ENCODE measurements at regions of chr2 and their contacts with region 1.

Region 1: GRCh38 chr2:107936433-107937359 is 49.6 kb upstream of the SLC5A7 start:
- DNase-seq: peak in 1 of 2 experiments; percentile 26
- H3K4me3 ChIP-seq: no peak overlapping the region
- H3K4me3 Mint-ChIP-seq: no peak overlapping the region
- H3K27ac Mint-ChIP-seq: no peak overlapping the region
- H3K4me1 ChIP-seq: no peaks in the 10 kb centered on the region
- H3K4me1 Mint-ChIP-seq: no peaks in the 10 kb centered on the region
- H3K27me3 ChIP-seq: no peaks in the 10 kb centered on the region
- H3K27me3 Mint-ChIP-seq: peaks cover 6% of the 10 kb centered on the region
- CTCF ChIP-seq: peak; percentile 17 to 61

Region 2: DNA sequence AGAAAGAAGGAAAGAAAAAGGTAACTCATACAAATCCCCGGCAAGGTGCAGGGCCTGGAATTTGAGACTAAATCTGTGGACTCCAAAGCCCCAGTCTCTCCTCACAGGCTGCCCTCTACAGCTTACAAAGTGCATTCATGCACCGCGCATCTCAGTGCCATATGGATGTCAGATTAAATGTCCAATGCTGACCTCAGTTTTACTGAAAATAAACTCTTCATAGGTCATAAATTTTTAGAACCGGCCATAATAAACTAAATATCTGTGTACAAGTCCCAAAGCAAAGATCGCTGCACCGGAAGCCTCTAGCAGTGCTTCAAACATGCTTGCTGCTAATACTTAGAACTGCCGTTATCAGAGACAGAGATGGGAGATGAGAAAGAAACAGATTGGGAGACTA is 1068.4 kb before region 1 on chr2:
- CTCF ChIA-PET with region 1: no interaction called
- POLR2A ChIA-PET with region 1: no interaction called
- intact Hi-C with region 1: loop called (anchors 10 kb)
- DNase-seq: no peak
- H3K4me3 ChIP-seq: no peak overlapping the region
- H3K4me3 Mint-ChIP-seq: no peak overlapping the region
- H3K27ac Mint-ChIP-seq: no peak overlapping the region
- H3K4me1 ChIP-seq: no peaks in the 10 kb centered on the region
- H3K4me1 Mint-ChIP-seq: no peaks in the 10 kb centered on the region
- H3K27me3 ChIP-seq: no peaks in the 10 kb centered on the region
- H3K27me3 Mint-ChIP-seq: peaks cover 15% of the 10 kb centered on the region
- CTCF ChIP-seq: no peak

Region 3: DNA sequence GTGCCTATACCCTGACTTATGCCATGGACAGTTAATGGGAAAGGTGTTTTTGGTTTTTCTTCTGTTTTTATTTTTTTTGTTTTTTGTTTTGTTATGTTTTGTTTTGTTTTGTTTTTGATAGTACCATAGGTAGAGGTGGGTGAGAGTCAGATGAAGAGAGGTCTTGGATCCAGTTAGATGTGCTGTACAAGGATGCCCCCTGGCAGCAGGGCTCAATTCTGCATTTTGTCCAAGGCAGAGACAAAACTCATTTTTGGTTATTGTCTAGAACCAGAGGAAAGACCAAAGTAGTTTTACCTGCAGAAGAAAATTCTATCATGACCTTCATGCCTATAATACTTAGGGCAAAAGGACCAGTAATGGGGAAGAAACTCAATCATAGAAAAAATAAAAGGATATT is 98.2 kb after region 1 on chr2:
- CTCF ChIA-PET with region 1: no interaction called
- POLR2A ChIA-PET with region 1: no interaction called
- intact Hi-C with region 1: loop called (anchors 5 kb)
- DNase-seq: no peak
- H3K4me3 ChIP-seq: no peak overlapping the region
- H3K4me3 Mint-ChIP-seq: no peak overlapping the region
- H3K27ac Mint-ChIP-seq: no peak overlapping the region
- H3K4me1 ChIP-seq: no peaks in the 10 kb centered on the region
- H3K4me1 Mint-ChIP-seq: no peaks in the 10 kb centered on the region
- H3K27me3 ChIP-seq: no peaks in the 10 kb centered on the region
- H3K27me3 Mint-ChIP-seq: no peaks in the 10 kb centered on the region
- CTCF ChIP-seq: no peak

Region 4: DNA sequence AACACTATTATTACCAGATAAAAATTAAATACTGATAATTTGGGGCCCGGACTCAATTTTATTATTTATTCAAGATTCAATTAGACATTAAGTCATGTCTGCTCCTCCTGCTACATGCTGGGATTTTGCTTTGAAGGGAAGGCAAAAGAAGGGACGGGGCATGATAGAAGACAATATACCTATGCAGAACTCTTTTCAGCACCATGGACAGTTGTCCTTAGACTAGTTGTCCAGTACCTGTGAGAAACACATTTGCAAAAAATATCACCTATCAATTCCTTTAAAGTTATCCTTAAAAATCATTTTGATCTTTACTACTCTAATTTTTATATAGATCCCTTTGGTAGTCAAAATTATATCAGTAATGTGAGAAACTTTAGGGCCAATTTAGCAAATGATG is 202.8 kb after region 1 on chr2:
- CTCF ChIA-PET with region 1: no interaction called
- POLR2A ChIA-PET with region 1: no interaction called
- intact Hi-C with region 1: no loop called
- DNase-seq: peak in 1 of 2 experiments; percentile 52
- H3K4me3 ChIP-seq: no peak overlapping the region
- H3K4me3 Mint-ChIP-seq: no peak overlapping the region
- H3K27ac Mint-ChIP-seq: no peak overlapping the region
- H3K4me1 ChIP-seq: no peaks in the 10 kb centered on the region
- H3K4me1 Mint-ChIP-seq: no peaks in the 10 kb centered on the region
- H3K27me3 ChIP-seq: no peaks in the 10 kb centered on the region
- H3K27me3 Mint-ChIP-seq: no peaks in the 10 kb centered on the region
- CTCF ChIP-seq: no peak

Region 5: DNA sequence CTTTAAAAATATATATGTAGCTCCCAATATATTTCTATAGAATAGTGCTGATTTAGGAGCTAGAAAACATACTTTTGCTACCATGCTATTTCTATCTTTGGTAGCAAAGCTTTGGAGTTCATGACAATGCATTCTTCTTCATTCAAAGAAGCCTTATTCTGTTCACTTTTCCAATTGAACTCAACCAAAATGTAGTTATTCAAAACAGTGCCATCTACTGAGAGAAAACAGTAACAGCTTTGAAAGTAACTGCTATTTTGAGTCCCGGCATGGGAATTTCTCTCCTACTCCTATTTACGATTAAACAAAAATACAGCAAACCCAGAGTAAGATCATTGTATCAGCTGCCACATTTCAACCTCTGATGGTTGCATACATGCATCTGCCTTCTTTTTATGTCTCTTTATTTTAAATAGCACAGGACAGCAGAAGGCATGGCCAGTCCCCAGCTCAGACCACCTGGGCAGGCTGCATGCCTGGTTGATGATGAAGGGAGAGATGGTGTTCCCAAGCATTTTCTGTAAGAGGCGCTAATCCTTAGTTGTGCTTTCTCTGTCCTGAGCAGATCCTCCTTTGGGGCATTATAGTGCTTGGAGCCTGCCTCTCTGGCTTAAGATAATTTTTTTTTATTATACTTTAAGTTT is 233.4 kb after region 1 on chr2:
- CTCF ChIA-PET with region 1: interaction called, 3 read pairs
- POLR2A ChIA-PET with region 1: no interaction called
- intact Hi-C with region 1: loop called (anchors 1 kb)
- DNase-seq: no peak
- H3K4me3 ChIP-seq: no peak overlapping the region
- H3K4me3 Mint-ChIP-seq: no peak overlapping the region
- H3K27ac Mint-ChIP-seq: no peak overlapping the region
- H3K4me1 ChIP-seq: no peaks in the 10 kb centered on the region
- H3K4me1 Mint-ChIP-seq: no peaks in the 10 kb centered on the region
- H3K27me3 ChIP-seq: no peaks in the 10 kb centered on the region
- H3K27me3 Mint-ChIP-seq: no peaks in the 10 kb centered on the region
- CTCF ChIP-seq: peak; percentile 22 to 64

Measured in Caco-2 (cell line).